Activated CD8-positive, alpha-beta memory T cell treated with anti-CD3 and anti-CD28 coated beads, Interleukin-2, amount 10 ng/mL, durations not matched to agents 7 days and 5 days (primary cell): ENCODE measurements at regions of chr2 and their contacts with region 1.

Region 1: GRCh38 chr2:8303322-8303832 is 378.5 kb upstream of the ID2 start:
- DNase-seq: peak; percentile 96
- ATAC-seq: peak; percentile 62
- H3K4me3 Mint-ChIP-seq: peak overlapping the region; percentile 35
- H3K27ac Mint-ChIP-seq: peak overlapping the region; percentile 92
- H3K4me1 Mint-ChIP-seq: peaks cover 93% of the 10 kb centered on the region
- H3K27me3 Mint-ChIP-seq: no peaks in the 10 kb centered on the region

Region 2: GRCh38 chr2:8344144-8345097 is 41.0 kb after region 1 on chr2:
- CTCF ChIA-PET with region 1: interaction called, 12 read pairs
- DNase-seq: no peak
- ATAC-seq: no peak
- H3K4me3 Mint-ChIP-seq: no peak overlapping the region
- H3K27ac Mint-ChIP-seq: peak overlapping the region; percentile 16
- H3K4me1 Mint-ChIP-seq: peaks cover 35% of the 10 kb centered on the region
- H3K27me3 Mint-ChIP-seq: no peaks in the 10 kb centered on the region